ENCODE measurements at regions of chr2 and their contacts with region 1.

Region 1: DNA sequence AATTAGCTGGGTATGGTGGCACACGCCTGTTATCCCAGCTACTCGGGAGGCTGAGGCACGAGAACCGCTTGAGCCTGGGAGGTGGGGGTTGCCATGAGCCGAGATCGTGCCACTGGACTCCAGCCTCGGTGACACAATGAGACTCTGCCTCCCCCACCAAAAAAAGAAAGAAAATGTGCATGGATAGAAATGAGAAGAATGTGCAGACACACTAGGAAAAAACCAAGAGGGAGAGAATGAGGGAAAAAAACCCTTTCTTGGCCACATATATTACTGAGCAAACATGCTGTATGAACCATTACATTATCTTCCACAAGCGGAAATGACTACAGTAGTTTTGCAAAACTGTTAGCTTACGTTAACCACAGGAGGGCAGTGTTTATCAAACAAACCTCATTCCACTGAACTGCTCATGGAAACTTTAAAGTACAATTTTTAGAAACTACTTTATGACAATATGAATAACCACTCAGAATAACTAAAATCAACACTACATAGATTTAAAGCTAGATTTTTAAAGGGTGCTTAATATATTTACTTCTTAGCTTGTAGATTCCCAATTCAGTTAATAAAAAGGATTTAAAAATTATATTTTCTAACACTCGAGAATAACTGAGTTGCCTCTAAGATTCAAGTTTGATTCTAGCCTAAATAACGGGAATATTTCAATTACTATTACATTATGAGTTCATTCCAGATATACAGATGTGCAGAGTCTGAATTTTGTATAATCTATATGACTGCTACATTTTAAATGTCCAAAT is 26.4 kb downstream of the ASXL2 start:
- DNase-seq: no peak
- ATAC-seq: peak; percentile 89

Region 2: GRCh38 chr2:25951071-25951547 is 99.2 kb after region 1 on chr2:
- intact Hi-C with region 1: loop called (anchors 10 kb)
- DNase-seq: peak; percentile 77
- ATAC-seq: peak; percentile 97

Region 3: DNA sequence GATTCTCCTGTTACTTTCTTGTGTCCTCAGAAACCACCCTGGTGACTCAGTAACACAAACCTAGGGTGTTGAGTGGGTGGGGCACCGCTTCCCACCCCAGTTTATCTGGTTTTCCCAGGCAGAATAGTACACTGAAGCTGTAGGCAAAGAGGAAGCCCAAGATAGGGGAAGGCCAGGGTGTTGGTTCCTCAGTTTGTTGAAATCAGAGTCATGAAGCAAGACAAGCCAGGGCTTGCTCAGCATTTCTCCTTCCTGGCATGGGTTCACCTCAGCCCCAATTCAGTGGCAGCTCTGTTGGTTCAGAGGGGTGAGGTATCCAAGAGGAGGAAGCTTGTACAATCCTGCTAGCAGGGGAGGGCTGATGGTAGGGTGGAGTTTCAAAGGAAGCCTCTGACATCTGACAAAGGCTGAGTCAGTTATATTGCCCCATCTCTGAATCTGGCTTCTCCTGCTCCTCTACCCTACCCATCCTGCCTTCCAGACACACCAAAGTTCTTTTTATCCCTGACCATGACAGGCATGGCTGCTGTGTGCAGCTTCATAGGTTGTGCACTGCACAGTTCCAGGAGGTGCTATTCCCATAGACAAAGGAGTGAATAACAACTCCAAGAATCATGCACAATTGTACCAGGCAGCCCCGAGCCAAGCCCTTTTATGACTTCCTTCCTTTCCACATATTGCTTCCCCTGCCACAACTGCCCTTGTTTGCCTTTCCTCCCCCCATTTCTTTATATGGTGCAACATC is 157.1 kb after region 1 on chr2:
- intact Hi-C with region 1: no loop called
- DNase-seq: peak; percentile 45
- ATAC-seq: peak; percentile 73

Measured in left ventricle myocardium superior (tissue), 1 donor.